Esophagus muscularis mucosa (tissue), 4 donors: ENCODE measurements at regions of chr11 and their contacts with region 1.

Region 1: GRCh38 chr11:119205574-119206510 is at the start of gene CBL:
- DNase-seq: peak; percentile 98
- H3K4me3 ChIP-seq: peak within 1 kb of the TSS; percentile 62 to 97 (median 92)
- H3K27ac ChIP-seq: peak within 1 kb of the TSS; percentile 90 to 96 (median 96)
- H3K4me1 ChIP-seq: peaks cover 11 to 41% (median 36%) of the 10 kb centered on the region in 4 donors
- H3K27me3 ChIP-seq: no peaks in the 10 kb centered on the region
- CTCF ChIP-seq: peak; percentile 88 to 99 (median 91)
- EP300 ChIP-seq: no peak
- POLR2A ChIP-seq: peak; percentile 7
- total RNA-seq, gene CBL: 20.7 to 27.7 (median 24.1) TPM

Region 2: DNA sequence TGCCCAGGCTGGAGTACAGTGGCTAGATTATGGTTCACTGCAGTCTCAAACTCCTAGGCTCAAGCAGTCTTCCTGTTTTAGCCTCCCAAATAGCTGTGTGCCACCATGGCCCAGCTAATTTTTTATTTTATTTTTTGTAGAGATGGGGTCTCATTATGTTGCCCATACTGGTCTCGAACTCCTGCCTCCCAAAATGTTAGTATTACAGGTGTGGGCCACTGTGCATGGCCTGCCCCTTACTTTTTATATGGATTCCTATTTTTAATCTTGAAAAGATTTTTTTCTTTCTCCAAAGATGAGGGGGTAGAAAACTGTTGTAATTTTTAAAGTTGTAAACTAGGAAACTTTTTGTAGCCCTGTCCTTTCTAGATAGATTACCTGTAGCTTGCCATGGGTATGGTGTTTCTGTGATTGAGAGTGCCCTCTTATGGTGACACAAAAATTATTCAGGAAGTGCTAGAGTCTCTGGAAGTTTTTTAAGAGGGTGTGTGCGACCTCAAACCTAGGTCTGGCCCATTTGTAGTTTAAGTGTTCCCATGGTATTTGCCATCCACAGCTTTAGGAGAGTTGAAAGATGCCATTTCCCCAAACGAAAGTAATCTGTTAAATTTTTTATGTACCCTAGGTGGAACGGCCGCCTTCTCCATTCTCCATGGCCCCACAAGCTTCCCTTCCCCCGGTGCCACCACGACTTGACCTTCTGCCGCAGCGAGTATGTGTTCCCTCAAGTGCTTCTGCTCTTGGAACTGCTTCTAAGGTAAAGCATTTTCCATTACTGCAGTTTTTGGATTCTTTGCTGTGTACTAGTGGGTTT is 78.7 kb after region 1 on chr11:
- intact Hi-C with region 1: loop called (anchors 5 kb)
- DNase-seq: no peak
- H3K4me3 ChIP-seq: no peak overlapping the region
- H3K27ac ChIP-seq: no peak overlapping the region
- H3K4me1 ChIP-seq: peaks cover 0 to 22% (median 8%) of the 10 kb centered on the region in 4 donors
- H3K27me3 ChIP-seq: no peaks in the 10 kb centered on the region
- CTCF ChIP-seq: peak; percentile 35 to 60 (median 53)
- EP300 ChIP-seq: no peak
- POLR2A ChIP-seq: no peak

Region 3: GRCh38 chr11:119323538-119324033 is 117.7 kb after region 1 on chr11:
- intact Hi-C with region 1: loop called (anchors 5 kb)
- DNase-seq: no peak
- H3K4me3 ChIP-seq: no peak overlapping the region
- H3K27ac ChIP-seq: peak overlapping the region; percentile 98 to 99 (median 98)
- H3K4me1 ChIP-seq: peaks cover 42 to 55% (median 49%) of the 10 kb centered on the region in 4 donors
- H3K27me3 ChIP-seq: no peaks in the 10 kb centered on the region
- CTCF ChIP-seq: peak; percentile 82 to 88 (median 87)
- EP300 ChIP-seq: no peak
- POLR2A ChIP-seq: no peak